GM10248 (cell line): ENCODE measurements at regions of chr1 and their contacts with region 1.

Region 1: GRCh38 chr1:101438359-101438758 is 201.5 kb downstream of the S1PR1 start:
- DNase-seq: peak; percentile 38
- CTCF ChIP-seq: peak; percentile 58

Region 2: DNA sequence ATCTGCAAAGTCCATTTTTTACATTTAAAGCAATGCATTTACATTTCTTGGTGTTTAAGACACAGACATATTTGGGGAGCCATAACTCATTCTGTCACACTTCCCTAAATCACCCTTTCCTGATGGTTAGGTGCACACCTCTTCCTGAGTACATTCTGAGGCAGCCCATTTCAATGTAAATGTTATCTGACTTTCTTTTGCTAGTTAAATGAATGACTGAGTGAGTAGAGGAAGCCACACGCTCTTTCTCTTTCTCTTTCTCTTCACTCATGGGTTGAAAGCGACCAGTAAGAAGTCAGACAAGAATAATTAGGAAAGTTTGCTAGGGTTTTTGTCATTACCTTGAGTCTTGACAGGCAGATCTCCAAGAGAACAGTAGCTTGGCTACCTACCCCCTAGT is 58.4 kb before region 1 on chr1:
- CTCF ChIA-PET with region 1: interaction called, 10 read pairs
- POLR2A ChIA-PET with region 1: no interaction called
- DNase-seq: peak; percentile 35
- CTCF ChIP-seq: no peak

Region 3: DNA sequence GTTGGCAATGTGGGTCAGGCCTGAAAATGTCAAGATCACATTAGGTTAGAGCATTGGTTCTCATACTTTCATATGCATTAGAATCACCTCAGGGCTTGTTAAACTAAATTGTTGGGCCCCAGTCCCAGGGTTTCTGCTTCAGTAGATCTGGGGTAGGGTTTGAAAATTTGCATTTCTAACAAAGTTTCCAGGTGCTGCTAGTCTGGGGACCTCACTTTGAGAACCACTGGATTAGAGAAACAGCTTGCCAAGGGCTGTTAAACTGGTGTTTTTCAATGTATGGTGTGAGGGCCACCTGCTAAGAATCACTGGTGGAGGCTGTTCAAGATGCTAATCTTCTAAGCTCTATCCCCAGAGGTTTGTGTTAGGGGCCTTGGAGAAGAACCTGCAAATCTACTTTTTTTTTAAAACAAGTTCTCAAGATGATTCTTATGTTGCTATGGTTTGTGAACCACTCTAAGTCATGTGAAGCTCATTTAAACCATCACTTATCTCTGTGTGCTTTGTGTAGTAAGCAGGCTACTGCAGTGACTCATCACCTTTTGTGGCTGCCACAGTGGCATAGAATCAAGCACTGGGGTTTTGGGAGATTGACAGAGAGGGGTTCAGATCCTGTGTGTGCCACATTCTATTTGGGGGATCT is 49.3 kb before region 1 on chr1:
- CTCF ChIA-PET with region 1: interaction called, 16 read pairs
- POLR2A ChIA-PET with region 1: interaction called, 3 read pairs
- DNase-seq: peak; percentile 23
- CTCF ChIP-seq: no peak

Region 4: DNA sequence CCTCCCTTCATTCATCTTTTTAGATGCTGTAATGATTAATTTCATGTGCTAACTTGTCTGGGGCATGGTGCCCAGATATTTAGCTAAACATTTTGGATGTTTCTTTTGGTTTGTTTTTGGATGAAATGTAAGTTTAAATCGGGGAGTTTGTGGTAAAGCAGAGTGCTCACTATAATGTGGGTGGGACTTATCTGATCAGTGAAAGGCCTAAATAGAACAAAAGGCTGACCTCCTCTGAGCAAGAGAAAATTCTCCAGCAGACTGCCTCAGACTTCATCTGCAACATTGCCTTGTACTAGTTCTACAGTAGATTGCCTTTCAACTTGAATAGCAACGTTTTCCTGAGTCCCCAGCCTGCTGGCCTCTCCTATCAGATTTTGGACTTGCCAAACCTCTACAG is 18.0 kb before region 1 on chr1:
- CTCF ChIA-PET with region 1: interaction called, 12 read pairs
- POLR2A ChIA-PET with region 1: interaction called, 3 read pairs
- DNase-seq: no peak
- CTCF ChIP-seq: no peak

Region 5: GRCh38 chr1:101451888-101452287 is 13.5 kb after region 1 on chr1:
- CTCF ChIA-PET with region 1: interaction called, 50 read pairs
- POLR2A ChIA-PET with region 1: no interaction called
- DNase-seq: no peak
- CTCF ChIP-seq: no peak

Region 6: DNA sequence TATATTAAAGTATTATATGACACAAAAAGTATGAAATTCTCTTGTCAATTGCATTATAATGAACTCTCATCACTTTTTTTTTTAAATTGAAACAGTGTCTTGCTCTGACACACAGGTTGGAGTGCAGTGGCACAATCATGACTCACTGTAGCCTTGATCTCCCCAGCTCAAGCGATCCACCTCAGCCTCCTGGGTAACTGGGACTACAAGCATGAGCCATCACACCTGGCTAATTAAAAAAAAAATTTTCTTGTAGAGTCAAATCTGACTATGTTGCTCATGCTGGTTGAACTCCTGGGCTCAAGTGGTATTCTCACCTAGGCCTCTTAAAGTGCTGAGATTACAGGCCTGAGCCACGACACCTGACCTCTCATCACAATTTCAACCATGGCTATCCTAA is 57.8 kb after region 1 on chr1:
- CTCF ChIA-PET with region 1: no interaction called
- POLR2A ChIA-PET with region 1: no interaction called
- DNase-seq: no peak
- CTCF ChIP-seq: no peak